ENCODE measurements at regions of chr17 and their contacts with region 1.

Region 1: DNA sequence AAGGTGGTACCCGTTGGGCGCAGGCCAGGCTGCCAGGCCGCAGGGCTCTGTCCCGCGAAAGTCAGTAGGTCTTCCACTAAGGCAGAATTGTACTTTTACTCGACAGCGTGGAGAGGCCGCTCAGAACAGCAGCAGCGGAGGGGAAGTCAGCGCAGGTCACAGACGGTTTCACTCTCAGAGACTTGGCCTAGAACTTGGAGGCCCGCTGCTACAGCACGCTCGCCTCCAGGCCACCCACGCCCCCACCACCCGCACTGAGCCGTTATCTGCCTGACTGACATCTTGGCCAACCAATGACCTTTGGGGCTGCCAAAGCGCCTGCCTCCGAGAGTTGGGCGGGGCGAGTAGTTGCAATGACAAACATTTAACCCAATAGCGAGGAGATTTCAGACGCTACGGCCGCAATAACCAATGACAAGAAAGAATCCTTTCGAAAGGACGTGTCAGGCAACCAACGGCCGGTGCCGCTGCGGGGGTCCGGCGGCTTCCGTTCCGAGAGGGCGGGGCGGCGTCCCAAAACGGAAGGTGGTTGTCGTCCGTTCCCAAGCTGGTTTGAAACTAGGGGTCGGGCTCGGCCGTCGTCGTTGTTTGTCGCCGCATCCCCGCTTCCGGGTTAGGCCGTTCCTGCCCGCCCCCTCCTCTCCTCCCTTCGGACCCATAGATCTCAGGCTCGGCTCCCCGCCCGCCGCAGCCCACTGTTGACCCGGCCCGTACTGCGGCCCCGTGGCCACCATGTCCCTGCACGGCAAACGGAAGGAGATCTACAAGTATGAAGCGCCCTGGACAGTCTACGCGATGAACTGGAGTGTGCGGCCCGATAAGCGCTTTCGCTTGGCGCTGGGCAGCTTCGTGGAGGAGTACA is at the start of gene DCAF7:
- DNase-seq: peak; percentile 100
- ATAC-seq: peak; percentile 94
- H3K4me3 ChIP-seq: peak within 1 kb of the TSS; percentile 73 to 91 (median 81)
- H3K4me3 Mint-ChIP-seq: peak within 1 kb of the TSS; percentile 87
- H3K27ac ChIP-seq: peak within 1 kb of the TSS; percentile 81 to 95
- H3K27ac Mint-ChIP-seq: peak within 1 kb of the TSS; percentile 94
- H3K4me1 ChIP-seq: peaks cover 41 to 47% of the 10 kb centered on the region in 2 donors
- H3K4me1 Mint-ChIP-seq: peaks cover 44% of the 10 kb centered on the region
- H3K27me3 ChIP-seq: no peaks in the 10 kb centered on the region
- H3K27me3 Mint-ChIP-seq: no peaks in the 10 kb centered on the region
- CTCF ChIP-seq: no peak
- total RNA-seq, gene DCAF7: 84.7 and 84.8 TPM in 2 replicates

Region 2: GRCh38 chr17:62968445-62968923 is 581.7 kb before region 1 on chr17:
- CTCF ChIA-PET with region 1: no interaction called
- POLR2A ChIA-PET with region 1: no interaction called
- intact Hi-C with region 1: loop called (anchors 2 kb)
- DNase-seq: peak; percentile 83
- ATAC-seq: peak; percentile 39
- H3K4me3 ChIP-seq: no peak overlapping the region
- H3K4me3 Mint-ChIP-seq: peak overlapping the region; percentile 74
- H3K27ac ChIP-seq: no peak overlapping the region
- H3K27ac Mint-ChIP-seq: peak overlapping the region; percentile 48
- H3K4me1 ChIP-seq: peaks cover 18 to 20% of the 10 kb centered on the region in 2 donors
- H3K4me1 Mint-ChIP-seq: peaks cover 21% of the 10 kb centered on the region
- H3K27me3 ChIP-seq: no peaks in the 10 kb centered on the region
- H3K27me3 Mint-ChIP-seq: no peaks in the 10 kb centered on the region
- CTCF ChIP-seq: peak; percentile 85

Region 3: DNA sequence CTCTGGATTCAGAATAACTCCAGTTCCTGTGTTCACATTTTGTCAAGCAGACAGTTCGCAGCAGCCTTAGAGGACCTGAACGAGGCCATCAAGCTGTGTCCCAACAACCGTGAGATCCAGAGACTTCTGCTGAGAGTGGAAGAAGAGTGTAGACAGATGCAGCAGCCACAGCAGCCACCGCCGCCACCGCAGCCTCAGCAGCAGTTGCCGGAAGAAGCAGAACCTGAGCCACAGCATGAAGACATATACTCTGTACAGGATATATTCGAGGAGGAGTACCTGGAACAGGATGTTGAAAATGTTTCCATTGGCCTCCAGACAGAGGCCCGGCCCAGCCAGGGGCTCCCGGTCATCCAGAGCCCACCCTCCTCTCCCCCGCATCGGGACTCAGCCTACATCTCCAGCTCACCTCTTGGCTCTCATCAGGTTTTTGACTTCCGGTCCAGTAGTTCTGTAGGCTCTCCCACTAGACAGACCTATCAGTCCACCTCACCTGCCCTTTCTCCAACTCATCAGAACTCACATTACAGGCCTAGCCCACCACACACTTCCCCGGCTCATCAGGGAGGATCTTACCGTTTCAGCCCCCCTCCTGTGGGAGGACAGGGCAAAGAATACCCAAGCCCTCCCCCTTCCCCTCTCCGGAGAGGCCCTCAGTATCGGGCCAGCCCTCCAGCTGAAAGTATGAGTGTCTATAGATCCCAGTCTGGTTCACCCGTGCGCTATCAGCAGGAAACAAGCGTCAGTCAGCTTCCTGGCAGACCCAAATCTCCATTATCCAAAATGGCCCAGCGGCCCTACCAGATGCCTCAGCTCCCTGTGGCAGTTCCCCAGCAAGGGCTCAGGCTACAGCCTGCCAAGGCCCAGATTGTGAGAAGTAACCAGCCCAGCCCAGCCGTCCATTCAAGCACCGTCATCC is 130.0 kb before region 1 on chr17:
- CTCF ChIA-PET with region 1: no interaction called
- POLR2A ChIA-PET with region 1: no interaction called
- intact Hi-C with region 1: no loop called
- DNase-seq: no peak
- ATAC-seq: no peak
- H3K4me3 ChIP-seq: no peak overlapping the region
- H3K4me3 Mint-ChIP-seq: no peak overlapping the region
- H3K27ac ChIP-seq: no peak overlapping the region
- H3K27ac Mint-ChIP-seq: no peak overlapping the region
- H3K4me1 ChIP-seq: peaks cover 0 to 2% of the 10 kb centered on the region in 2 donors
- H3K4me1 Mint-ChIP-seq: no peaks in the 10 kb centered on the region
- H3K27me3 ChIP-seq: no peaks in the 10 kb centered on the region
- H3K27me3 Mint-ChIP-seq: peaks cover 4% of the 10 kb centered on the region
- CTCF ChIP-seq: no peak

Region 4: GRCh38 chr17:63445979-63446691 is 104.0 kb before region 1 on chr17 and contains the start of gene CYB561:
- CTCF ChIA-PET with region 1: no interaction called
- POLR2A ChIA-PET with region 1: interaction called, 4 read pairs
- intact Hi-C with region 1: loop called (anchors 1 kb)
- DNase-seq: peak; percentile 94
- ATAC-seq: peak; percentile 73
- H3K4me3 ChIP-seq: peak within 1 kb of the TSS in 4 of 5 experiments; percentile 54 to 70 (median 61)
- H3K4me3 Mint-ChIP-seq: peak within 1 kb of the TSS; percentile 77
- H3K27ac ChIP-seq: peak within 1 kb of the TSS; percentile 38 to 79
- H3K27ac Mint-ChIP-seq: peak within 1 kb of the TSS; percentile 81
- H3K4me1 ChIP-seq: peaks cover 13 to 24% of the 10 kb centered on the region in 2 donors
- H3K4me1 Mint-ChIP-seq: peaks cover 15% of the 10 kb centered on the region
- H3K27me3 ChIP-seq: peaks cover 0 to 2% (median 0%) of the 10 kb centered on the region in 4 experiments
- H3K27me3 Mint-ChIP-seq: peaks cover 6% of the 10 kb centered on the region
- CTCF ChIP-seq: peak; percentile 59
- total RNA-seq, gene CYB561: 3.6 and 4.9 TPM in 2 replicates

Region 5: GRCh38 chr17:63571763-63572271 is 21.6 kb after region 1 on chr17:
- CTCF ChIA-PET with region 1: no interaction called
- POLR2A ChIA-PET with region 1: no interaction called
- intact Hi-C with region 1: no loop called
- DNase-seq: no peak
- ATAC-seq: no peak
- H3K4me3 ChIP-seq: no peak overlapping the region
- H3K4me3 Mint-ChIP-seq: no peak overlapping the region
- H3K27ac ChIP-seq: no peak overlapping the region
- H3K27ac Mint-ChIP-seq: no peak overlapping the region
- H3K4me1 ChIP-seq: no peaks in the 10 kb centered on the region
- H3K4me1 Mint-ChIP-seq: peaks cover 23% of the 10 kb centered on the region
- H3K27me3 ChIP-seq: no peaks in the 10 kb centered on the region
- H3K27me3 Mint-ChIP-seq: no peaks in the 10 kb centered on the region
- CTCF ChIP-seq: no peak

Region 6: GRCh38 chr17:63600569-63601438 is 50.6 kb after region 1 on chr17 and contains the start of gene TACO1:
- CTCF ChIA-PET with region 1: no interaction called
- POLR2A ChIA-PET with region 1: interaction called, 5 read pairs
- intact Hi-C with region 1: loop called (anchors 1 kb)
- DNase-seq: peak; percentile 87
- ATAC-seq: peak; percentile 97
- H3K4me3 ChIP-seq: peak within 1 kb of the TSS; percentile 67 to 97 (median 91)
- H3K4me3 Mint-ChIP-seq: peak within 1 kb of the TSS; percentile 95
- H3K27ac ChIP-seq: peak within 1 kb of the TSS; percentile 39 to 88
- H3K27ac Mint-ChIP-seq: peak within 1 kb of the TSS; percentile 93
- H3K4me1 ChIP-seq: peaks cover 15 to 19% of the 10 kb centered on the region in 2 donors
- H3K4me1 Mint-ChIP-seq: peaks cover 21% of the 10 kb centered on the region
- H3K27me3 ChIP-seq: no peaks in the 10 kb centered on the region
- H3K27me3 Mint-ChIP-seq: no peaks in the 10 kb centered on the region
- CTCF ChIP-seq: no peak
- total RNA-seq, gene TACO1: 15.9 and 17.2 TPM in 2 replicates

Region 7: GRCh38 chr17:63741221-63742049 is 191.3 kb after region 1 on chr17 and contains the start of gene STRADA:
- CTCF ChIA-PET with region 1: no interaction called
- POLR2A ChIA-PET with region 1: no interaction called
- intact Hi-C with region 1: loop called (anchors 1 kb)
- DNase-seq: peak; percentile 99
- ATAC-seq: peak; percentile 89
- H3K4me3 ChIP-seq: peak within 1 kb of the TSS; percentile 85 to 99 (median 93)
- H3K4me3 Mint-ChIP-seq: peak within 1 kb of the TSS; percentile 89
- H3K27ac ChIP-seq: peak within 1 kb of the TSS; percentile 97
- H3K27ac Mint-ChIP-seq: peak within 1 kb of the TSS; percentile 93
- H3K4me1 ChIP-seq: peaks cover 15 to 28% of the 10 kb centered on the region in 2 donors
- H3K4me1 Mint-ChIP-seq: peaks cover 28% of the 10 kb centered on the region
- H3K27me3 ChIP-seq: no peaks in the 10 kb centered on the region
- H3K27me3 Mint-ChIP-seq: no peaks in the 10 kb centered on the region
- CTCF ChIP-seq: no peak
- total RNA-seq, gene STRADA: 87.4 and 93.2 TPM in 2 replicates

Region 8: DNA sequence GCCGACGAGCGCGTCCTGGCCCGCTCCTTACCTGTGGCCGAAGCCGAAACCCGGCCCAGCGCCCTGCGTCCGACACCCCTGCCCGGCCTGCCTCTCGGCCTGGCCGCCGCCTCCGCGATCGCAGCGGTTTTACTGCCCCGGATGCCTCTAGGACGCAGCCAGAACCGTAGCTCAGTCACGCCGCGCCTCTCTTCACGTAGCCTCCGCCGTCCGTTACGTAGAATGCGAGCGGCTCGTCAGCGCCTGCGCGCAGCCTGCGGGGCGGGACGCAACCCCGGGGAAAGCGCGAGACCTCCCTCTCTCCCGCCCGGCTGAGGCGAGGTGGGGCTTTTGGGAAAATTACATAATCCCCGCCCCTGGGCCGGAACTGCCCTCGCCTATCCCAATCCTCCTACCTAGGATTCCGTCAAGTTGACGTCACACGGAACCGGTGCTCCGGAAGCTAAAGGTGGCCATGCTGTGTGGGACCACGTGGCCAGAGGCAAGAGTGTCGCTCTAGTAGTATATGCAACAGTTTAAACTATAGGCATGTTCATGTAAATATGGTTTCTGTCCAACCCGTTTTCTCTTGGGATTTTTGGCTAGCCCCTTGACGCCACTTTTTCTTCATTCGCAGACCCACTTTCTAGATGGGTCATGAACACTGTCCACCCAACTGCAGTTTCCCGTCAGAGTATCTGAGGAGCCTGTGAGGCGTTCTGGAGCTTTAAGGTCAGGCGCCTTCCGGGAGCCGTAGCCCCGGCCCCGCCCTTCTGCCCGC is 223.4 kb after region 1 on chr17 and contains the start of gene CCDC47:
- CTCF ChIA-PET with region 1: no interaction called
- POLR2A ChIA-PET with region 1: interaction called, 5 read pairs
- intact Hi-C with region 1: loop called (anchors 1 kb)
- DNase-seq: peak; percentile 99
- ATAC-seq: peak; percentile 78
- H3K4me3 ChIP-seq: peak within 1 kb of the TSS; percentile 78 to 99 (median 90)
- H3K4me3 Mint-ChIP-seq: peak within 1 kb of the TSS; percentile 98
- H3K27ac ChIP-seq: peak within 1 kb of the TSS; percentile 78 to 94
- H3K27ac Mint-ChIP-seq: peak within 1 kb of the TSS; percentile 99
- H3K4me1 ChIP-seq: peaks cover 28 to 34% of the 10 kb centered on the region in 2 donors
- H3K4me1 Mint-ChIP-seq: peaks cover 51% of the 10 kb centered on the region
- H3K27me3 ChIP-seq: no peaks in the 10 kb centered on the region
- H3K27me3 Mint-ChIP-seq: no peaks in the 10 kb centered on the region
- CTCF ChIP-seq: no peak
- total RNA-seq, gene CCDC47: 36.2 and 39.7 TPM in 2 replicates

Region 9: DNA sequence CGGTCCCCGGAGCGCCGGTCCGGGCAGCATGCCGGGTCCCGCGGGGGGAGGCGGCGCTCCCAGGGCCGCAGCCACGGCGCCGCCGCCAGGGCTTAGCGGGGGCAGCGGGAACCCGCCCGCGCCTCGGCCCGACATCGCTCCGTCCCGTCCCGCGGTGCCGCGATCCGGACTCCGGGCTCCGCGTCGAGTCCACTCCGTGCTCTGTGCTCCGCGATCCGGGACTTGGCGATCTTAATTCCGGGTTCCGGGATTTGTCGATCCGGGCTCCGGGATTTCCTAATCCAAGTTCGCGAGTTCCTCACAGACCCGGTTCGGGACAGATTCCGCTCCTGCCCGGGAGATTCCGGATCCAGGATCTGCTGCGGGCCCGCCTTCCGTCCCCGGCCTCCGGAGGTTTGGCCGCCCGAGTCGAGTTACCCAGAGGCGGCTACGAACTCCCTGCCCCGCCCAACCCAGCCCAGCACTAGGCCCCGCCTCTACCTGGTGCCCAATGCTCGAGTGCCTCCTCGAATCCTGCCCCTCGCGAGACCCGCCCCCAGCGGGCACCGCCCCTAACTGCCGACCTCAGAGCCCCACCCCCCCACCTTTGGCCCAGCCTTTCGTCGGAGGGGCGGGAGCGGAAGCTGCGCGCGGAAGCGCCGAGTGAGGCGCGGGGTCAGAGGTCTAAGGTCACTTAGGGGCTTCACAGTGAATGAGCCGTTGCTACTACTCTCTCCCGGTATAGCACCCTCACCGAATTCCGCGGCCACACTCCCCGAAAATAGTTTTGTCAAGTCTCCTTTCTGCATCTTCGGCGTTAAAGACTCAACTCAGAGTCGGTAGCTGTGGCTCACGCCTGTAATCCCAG is 292.6 kb after region 1 on chr17 and contains the start of gene SMARCD2:
- CTCF ChIA-PET with region 1: no interaction called
- POLR2A ChIA-PET with region 1: no interaction called
- intact Hi-C with region 1: loop called (anchors 2 kb)
- DNase-seq: peak; percentile 99
- ATAC-seq: peak; percentile 93
- H3K4me3 ChIP-seq: peak within 1 kb of the TSS; percentile 65 to 92 (median 89)
- H3K4me3 Mint-ChIP-seq: peak within 1 kb of the TSS; percentile 94
- H3K27ac ChIP-seq: peak within 1 kb of the TSS; percentile 90 to 92
- H3K27ac Mint-ChIP-seq: peak within 1 kb of the TSS; percentile 94
- H3K4me1 ChIP-seq: peaks cover 35 to 51% of the 10 kb centered on the region in 2 donors
- H3K4me1 Mint-ChIP-seq: peaks cover 43% of the 10 kb centered on the region
- H3K27me3 ChIP-seq: no peaks in the 10 kb centered on the region
- H3K27me3 Mint-ChIP-seq: no peaks in the 10 kb centered on the region
- CTCF ChIP-seq: no peak
- total RNA-seq, gene SMARCD2: 124 and 125 TPM in 2 replicates

Region 10: DNA sequence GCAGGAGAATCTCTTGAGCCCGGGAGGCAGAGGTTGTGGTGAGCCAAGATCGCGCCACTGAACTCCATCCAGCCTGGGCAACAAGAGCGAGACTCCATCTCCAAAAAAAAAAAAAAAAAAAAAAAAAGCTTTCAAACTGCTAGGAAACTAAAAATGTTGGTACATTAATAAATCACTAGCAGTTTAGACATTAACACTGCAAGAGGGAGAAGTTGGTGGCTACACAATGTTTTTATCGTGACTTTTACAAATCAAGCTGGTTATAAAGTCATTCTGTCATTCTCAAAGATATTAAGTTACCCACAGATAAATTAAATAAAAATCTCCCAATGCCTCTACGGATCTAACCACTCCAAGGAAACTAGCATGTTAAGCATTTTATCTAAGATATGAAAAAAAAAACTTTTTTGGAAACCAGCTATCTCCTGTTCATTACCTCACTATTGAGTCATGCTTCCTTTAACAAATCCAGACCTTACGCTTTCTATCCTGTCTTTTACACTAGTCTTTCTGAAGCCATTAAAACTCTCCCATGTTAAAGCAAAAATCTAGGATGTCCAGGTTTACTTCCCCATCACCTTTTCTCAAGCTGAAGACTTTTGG is 1197.9 kb after region 1 on chr17:
- CTCF ChIA-PET with region 1: no interaction called
- POLR2A ChIA-PET with region 1: no interaction called
- intact Hi-C with region 1: no loop called
- DNase-seq: no peak
- ATAC-seq: no peak
- H3K4me3 ChIP-seq: no peak overlapping the region
- H3K4me3 Mint-ChIP-seq: no peak overlapping the region
- H3K27ac ChIP-seq: no peak overlapping the region
- H3K27ac Mint-ChIP-seq: no peak overlapping the region
- H3K4me1 ChIP-seq: no peaks in the 10 kb centered on the region
- H3K4me1 Mint-ChIP-seq: no peaks in the 10 kb centered on the region
- H3K27me3 ChIP-seq: no peaks in the 10 kb centered on the region
- H3K27me3 Mint-ChIP-seq: no peaks in the 10 kb centered on the region
- CTCF ChIP-seq: no peak